Activated T-helper 1 cell treated with anti-CD3 and anti-CD28 coated beads, Interleukin-12 subunit alpha, Interleukin-12 subunit beta, Interleukin-2, Interleukin-4 antibody, amounts not matched to agents 30 ng/mL and 10 ng/mL and 1 ng/mL, durations not matched to agents 14 hours and 24 hours and 36 hours (primary cell): ENCODE measurements at regions of chr6 and their contacts with region 1.

Region 1: GRCh38 chr6:49225471-49225870 is 237.6 kb downstream of the MMUT start:
- DNase-seq: no peak
- H3K4me3 Mint-ChIP-seq: no peak overlapping the region
- H3K27ac Mint-ChIP-seq: no peak overlapping the region
- H3K4me1 Mint-ChIP-seq: no peaks in the 10 kb centered on the region
- H3K27me3 Mint-ChIP-seq: no peaks in the 10 kb centered on the region

Region 2: DNA sequence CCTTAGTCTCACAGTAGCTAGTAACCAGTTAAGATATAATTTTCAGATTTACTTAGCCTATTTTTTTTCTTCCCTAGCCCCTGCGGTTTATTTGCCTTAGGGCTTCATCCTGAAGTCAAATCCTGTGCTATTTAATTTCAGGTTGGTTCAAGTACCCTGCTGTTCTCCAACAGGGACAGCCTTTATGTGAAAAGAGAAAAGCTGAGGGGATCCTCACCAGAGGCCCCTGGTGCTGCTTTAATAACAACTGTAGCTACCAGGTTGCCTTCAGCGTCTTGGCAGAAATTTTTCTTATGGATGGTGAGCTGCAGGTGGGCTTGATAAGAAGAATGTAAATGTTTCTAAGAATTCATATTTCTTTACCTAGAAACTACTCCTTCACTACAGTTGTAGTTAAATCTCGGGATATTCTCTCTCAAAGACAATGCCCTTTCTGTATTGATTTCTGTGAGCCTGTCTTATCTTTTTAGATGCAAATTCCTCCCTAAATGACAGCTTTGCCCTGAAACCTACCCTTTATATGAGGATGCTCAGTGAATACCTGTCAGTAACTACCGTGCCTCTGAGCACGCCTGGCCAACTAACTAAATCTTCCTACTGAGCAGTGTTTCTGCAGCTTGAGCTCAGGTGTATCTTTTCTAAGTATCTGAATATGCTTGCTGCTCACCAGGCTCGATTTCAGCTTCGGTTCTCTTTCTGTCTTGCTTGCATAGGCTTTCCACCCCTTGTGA is 82.9 kb before region 1 on chr6:
- intact Hi-C with region 1: no loop called
- DNase-seq: no peak
- H3K4me3 Mint-ChIP-seq: no peak overlapping the region
- H3K27ac Mint-ChIP-seq: no peak overlapping the region
- H3K4me1 Mint-ChIP-seq: no peaks in the 10 kb centered on the region
- H3K27me3 Mint-ChIP-seq: no peaks in the 10 kb centered on the region

Region 3: DNA sequence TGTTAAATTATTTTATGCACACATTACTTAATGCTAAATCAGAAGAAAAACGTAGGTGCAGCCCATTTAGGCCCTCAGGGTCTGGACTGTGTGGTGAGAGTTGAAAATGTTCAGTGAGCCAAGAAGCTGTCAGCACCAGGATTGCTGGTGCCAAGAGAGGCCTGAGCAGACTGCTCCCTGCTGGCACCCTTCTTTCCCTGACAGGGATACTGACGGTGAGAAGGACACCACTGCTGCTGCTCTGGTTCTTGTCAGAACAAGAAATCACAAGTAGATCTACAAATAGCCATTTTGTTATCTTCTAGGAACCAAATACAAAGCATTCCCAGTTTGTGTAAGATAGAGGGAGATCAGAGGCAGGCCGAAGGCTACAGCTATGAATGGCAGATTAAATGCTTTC is 689.6 kb after region 1 on chr6:
- intact Hi-C with region 1: loop called (anchors 5 kb)
- DNase-seq: no peak
- H3K4me3 Mint-ChIP-seq: no peak overlapping the region
- H3K27ac Mint-ChIP-seq: no peak overlapping the region
- H3K4me1 Mint-ChIP-seq: no peaks in the 10 kb centered on the region
- H3K27me3 Mint-ChIP-seq: no peaks in the 10 kb centered on the region